ENCODE measurements at regions of chr15 and their contacts with region 1.

Region 1: GRCh38 chr15:78540141-78540928 is at the start of gene PSMA4:
- DNase-seq: peak; percentile 97
- ATAC-seq: peak; percentile 82
- H3K4me3 Mint-ChIP-seq: peak within 1 kb of the TSS; percentile 93
- H3K27ac Mint-ChIP-seq: peak within 1 kb of the TSS; percentile 97
- H3K4me1 Mint-ChIP-seq: peaks cover 28% of the 10 kb centered on the region
- H3K27me3 Mint-ChIP-seq: no peaks in the 10 kb centered on the region
- total RNA-seq, gene PSMA4: 181 to 183 TPM

Region 2: DNA sequence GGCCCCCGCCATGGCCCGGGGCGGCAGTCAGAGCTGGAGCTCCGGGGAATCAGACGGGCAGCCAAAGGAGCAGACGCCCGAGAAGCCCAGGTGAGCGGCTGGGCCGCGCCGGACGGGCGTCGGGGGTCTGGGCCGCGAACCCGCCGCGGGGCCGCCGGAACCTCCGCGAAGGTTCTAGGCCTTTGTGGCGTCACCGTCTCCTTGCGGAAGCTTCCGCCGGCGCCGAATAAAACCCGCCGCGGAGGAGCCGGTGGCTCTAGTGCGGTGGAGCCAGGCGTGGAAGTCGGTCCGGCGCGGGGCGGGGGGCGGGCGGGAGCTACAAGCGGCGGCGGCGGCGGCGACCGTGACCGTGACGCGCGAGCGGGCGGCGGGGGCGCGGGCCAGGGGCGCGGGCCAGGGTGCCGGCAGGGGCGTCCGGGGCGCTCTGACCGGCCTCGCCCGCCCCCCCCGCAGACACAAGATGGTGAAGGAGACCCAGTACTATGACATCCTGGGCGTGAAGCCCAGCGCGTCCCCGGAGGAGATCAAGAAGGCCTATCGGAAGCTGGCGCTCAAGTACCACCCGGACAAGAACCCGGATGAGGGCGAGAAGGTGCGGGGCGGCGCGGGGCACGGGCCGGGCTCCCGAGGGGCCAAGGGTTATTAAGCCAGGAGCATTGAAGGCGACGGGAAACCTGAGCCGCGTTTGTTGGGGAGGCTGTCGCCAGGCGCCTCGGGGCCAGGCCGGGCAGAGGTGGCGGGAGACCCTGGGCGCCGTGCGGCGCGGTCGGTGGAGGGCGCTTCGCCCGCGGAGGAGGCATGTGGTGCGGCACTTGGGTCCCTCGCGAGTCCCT is 275.8 kb before region 1 on chr15 and contains the start of gene DNAJA4:
- POLR2A ChIA-PET with region 1: interaction called, 11 read pairs
- DNase-seq: peak; percentile 77
- ATAC-seq: peak; percentile 82
- H3K4me3 Mint-ChIP-seq: peak within 1 kb of the TSS; percentile 88
- H3K27ac Mint-ChIP-seq: peak within 1 kb of the TSS; percentile 89
- H3K4me1 Mint-ChIP-seq: peaks cover 24% of the 10 kb centered on the region
- H3K27me3 Mint-ChIP-seq: no peaks in the 10 kb centered on the region
- total RNA-seq, gene DNAJA4: 26.0 to 28.5 TPM

Region 3: GRCh38 chr15:78437762-78438302 is 102.5 kb before region 1 on chr15 and contains the start of gene IREB2:
- POLR2A ChIA-PET with region 1: interaction called, 27 read pairs
- DNase-seq: peak; percentile 98
- ATAC-seq: peak; percentile 84
- H3K4me3 Mint-ChIP-seq: peak within 1 kb of the TSS; percentile 96
- H3K27ac Mint-ChIP-seq: peak within 1 kb of the TSS; percentile 96
- H3K4me1 Mint-ChIP-seq: peaks cover 38% of the 10 kb centered on the region
- H3K27me3 Mint-ChIP-seq: peaks cover 3% of the 10 kb centered on the region
- total RNA-seq, gene IREB2: 60.6 to 61.4 TPM

Region 4: GRCh38 chr15:78506971-78507830 is 33.1 kb before region 1 on chr15 and contains the start of gene HYKK:
- POLR2A ChIA-PET with region 1: interaction called, 12 read pairs
- DNase-seq: peak; percentile 75
- ATAC-seq: peak; percentile 89
- H3K4me3 Mint-ChIP-seq: peak within 1 kb of the TSS; percentile 96
- H3K27ac Mint-ChIP-seq: peak within 1 kb of the TSS; percentile 56
- H3K4me1 Mint-ChIP-seq: peaks cover 15% of the 10 kb centered on the region
- H3K27me3 Mint-ChIP-seq: peaks cover 14% of the 10 kb centered on the region
- total RNA-seq, gene HYKK: 1.6 to 2.4 TPM

Region 5: DNA sequence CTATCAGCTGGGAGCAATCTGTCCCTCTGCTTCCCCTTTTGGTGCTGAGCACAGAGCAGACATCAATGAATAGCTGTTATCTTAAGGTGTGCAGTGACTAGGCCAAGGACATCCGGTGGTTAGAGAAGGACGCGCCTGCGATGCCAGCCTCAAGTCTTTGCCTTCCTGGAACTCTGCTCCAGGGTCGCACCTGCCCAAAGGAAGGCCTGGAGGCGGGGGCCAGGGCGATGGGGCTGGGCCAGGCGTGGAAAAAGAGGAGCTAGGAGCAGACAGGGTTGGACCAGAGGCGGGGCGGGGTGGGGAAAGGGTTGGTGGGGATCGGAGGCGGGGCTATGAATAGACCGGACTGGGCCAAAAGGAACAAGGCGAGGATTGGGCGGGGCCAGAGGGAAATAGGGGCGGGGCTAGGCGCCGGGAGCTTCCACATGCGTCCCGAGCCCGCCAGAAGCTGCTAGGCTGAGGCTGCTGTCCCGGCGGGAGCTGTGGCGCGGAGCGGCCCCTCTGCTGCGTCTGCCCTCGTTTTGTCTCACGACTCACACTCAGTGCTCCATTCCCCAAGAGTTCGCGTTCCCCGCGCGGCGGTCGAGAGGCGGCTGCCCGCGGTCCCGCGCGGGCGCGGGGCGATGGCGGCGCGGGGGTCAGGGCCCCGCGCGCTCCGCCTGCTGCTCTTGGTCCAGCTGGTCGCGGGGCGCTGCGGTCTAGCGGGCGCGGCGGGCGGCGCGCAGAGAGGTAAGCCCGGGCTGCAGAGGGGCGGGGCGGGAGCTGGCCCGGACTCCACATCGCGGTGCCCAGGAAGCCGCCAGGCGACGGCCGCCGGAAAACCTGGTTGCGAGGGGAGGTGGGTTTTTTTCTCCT is 25.0 kb after region 1 on chr15 and contains the start of gene CHRNA5:
- POLR2A ChIA-PET with region 1: interaction called, 18 read pairs
- DNase-seq: peak; percentile 60
- ATAC-seq: peak; percentile 71
- H3K4me3 Mint-ChIP-seq: peak within 1 kb of the TSS; percentile 94
- H3K27ac Mint-ChIP-seq: peak within 1 kb of the TSS; percentile 84
- H3K4me1 Mint-ChIP-seq: peaks cover 19% of the 10 kb centered on the region
- H3K27me3 Mint-ChIP-seq: peaks cover 34% of the 10 kb centered on the region
- total RNA-seq, gene CHRNA5: 1.2 to 2.2 TPM